ENCODE measurements at regions of chr10 and their contacts with region 1.

Region 1: GRCh38 chr10:114708717-114709335 is 50.8 kb upstream of the ABLIM1 start:
- DNase-seq: no peak
- ATAC-seq: no peak
- H3K4me3 ChIP-seq: no peak overlapping the region
- H3K27ac ChIP-seq: no peak overlapping the region
- H3K4me1 ChIP-seq: peaks cover 4% of the 10 kb centered on the region
- H3K27me3 ChIP-seq: no peaks in the 10 kb centered on the region

Region 2: GRCh38 chr10:114779803-114780609 is 71.2 kb after region 1 on chr10:
- intact Hi-C with region 1: loop called in 1 of 4 experiments (anchors 5 kb)
- DNase-seq: no peak
- ATAC-seq: peak; percentile 45 to 78
- H3K4me3 ChIP-seq: no peak overlapping the region
- H3K27ac ChIP-seq: peak overlapping the region; percentile 45
- H3K4me1 ChIP-seq: no peaks in the 10 kb centered on the region
- H3K27me3 ChIP-seq: no peaks in the 10 kb centered on the region